ENCODE measurements at regions of chr10 and their contacts with region 1.

Region 1: DNA sequence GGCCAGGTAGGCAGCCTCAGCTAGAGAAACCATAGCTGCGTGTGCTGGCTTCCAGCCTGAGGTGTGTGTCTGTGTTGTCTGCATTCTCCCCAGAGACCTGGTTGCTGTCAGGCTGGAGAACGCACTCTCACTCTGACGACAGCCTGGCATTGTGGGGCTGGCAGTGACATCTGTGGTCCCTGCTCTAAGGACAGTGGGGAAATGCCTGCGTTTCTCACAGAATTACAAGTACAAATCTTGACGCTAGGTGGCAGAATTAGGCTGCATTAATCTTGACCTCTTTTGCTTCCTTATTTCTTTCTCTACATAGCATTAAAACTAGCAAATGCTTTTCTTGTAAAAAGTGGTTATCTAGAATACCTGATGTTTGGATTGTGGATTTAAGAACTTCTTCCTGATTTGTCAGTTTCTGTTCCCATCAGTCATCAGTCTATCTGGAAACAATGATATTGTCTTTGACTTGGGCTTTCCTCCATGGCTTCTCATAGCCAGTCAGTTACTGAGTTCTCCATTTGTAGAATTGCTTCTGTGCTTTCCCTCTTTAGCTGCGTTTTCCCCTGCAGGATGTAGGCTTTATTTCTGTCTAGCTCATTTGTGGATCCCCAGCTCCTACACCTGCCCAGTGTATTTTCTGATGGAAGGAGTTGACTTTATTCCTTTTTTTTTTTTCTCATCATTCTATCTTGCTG is 86.0 kb downstream of the FANK1 start:
- DNase-seq: peak; percentile 31
- ATAC-seq: peak; percentile 85
- H3K4me3 Mint-ChIP-seq: no peak overlapping the region
- H3K27ac Mint-ChIP-seq: peak overlapping the region; percentile 64
- H3K4me1 Mint-ChIP-seq: peaks cover 37% of the 10 kb centered on the region
- H3K27me3 Mint-ChIP-seq: peaks cover 5% of the 10 kb centered on the region
- CTCF ChIP-seq: no peak

Region 2: DNA sequence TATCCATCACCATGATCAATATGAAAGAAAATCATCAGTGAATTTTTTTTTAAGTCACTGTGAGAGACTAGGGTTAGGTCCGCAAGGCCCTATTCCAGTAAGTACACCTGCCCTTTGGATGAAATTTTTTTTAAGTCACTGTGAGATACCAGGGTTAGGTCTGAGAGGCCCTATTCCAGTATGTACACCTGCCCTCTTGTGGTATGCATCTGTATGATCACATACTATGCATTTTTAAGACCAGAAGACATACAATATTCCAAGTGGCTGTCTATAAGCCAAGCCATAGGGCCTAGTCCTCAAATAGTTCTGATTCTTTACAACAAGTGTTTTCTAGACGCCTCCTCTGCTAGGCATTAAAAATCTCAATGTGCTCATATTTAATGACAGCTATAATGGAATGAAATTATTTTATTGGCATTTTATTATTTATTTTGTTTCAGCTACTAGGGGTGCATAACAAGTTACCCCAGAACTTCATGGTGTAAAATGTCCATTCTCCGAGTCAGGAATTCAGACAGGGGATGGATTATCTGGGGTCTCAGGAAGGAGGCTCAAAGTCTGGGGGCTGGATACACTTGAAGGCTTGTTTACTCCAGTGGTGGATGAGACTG is 352.5 kb before region 1 on chr10:
- CTCF ChIA-PET with region 1: no interaction called
- POLR2A ChIA-PET with region 1: no interaction called
- intact Hi-C with region 1: no loop called
- DNase-seq: no peak
- ATAC-seq: no peak
- H3K4me3 Mint-ChIP-seq: no peak overlapping the region
- H3K27ac Mint-ChIP-seq: no peak overlapping the region
- H3K4me1 Mint-ChIP-seq: no peaks in the 10 kb centered on the region
- H3K27me3 Mint-ChIP-seq: peaks cover 6% of the 10 kb centered on the region
- CTCF ChIP-seq: no peak

Region 3: DNA sequence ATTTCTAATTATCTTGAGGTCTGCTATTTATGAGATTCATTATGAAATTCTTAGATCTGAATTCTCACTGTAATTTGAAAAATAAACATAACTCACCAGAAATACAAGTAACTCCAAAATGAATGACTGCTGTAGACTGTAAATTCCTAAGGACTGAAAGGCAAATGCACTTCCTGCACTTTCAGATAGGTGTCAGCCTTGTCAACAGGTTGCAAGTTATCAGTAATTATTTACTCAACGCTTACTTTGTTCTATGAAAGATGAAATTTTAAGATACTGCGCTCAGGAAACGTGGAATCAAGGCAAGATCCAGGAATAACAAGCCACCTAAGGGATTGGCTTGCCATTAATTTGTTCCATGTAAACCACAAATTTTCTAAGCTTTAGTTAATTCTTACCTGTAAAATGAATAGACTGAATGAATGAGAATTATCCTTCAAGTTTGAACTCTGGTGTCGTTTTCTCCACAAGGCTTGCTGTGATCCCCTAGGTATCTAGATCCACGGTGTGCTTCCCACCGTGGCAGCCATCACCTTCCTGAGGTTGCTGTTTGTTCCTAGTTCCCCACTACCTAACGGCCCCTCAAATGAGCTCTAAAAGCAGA is 113.9 kb before region 1 on chr10:
- CTCF ChIA-PET with region 1: no interaction called
- POLR2A ChIA-PET with region 1: no interaction called
- intact Hi-C with region 1: loop called (anchors 2 kb)
- DNase-seq: no peak
- ATAC-seq: no peak
- H3K4me3 Mint-ChIP-seq: no peak overlapping the region
- H3K27ac Mint-ChIP-seq: no peak overlapping the region
- H3K4me1 Mint-ChIP-seq: no peaks in the 10 kb centered on the region
- H3K27me3 Mint-ChIP-seq: no peaks in the 10 kb centered on the region
- CTCF ChIP-seq: peak; percentile 44

Region 4: GRCh38 chr10:126101801-126102200 is 119.4 kb after region 1 on chr10:
- CTCF ChIA-PET with region 1: interaction called, 57 read pairs
- POLR2A ChIA-PET with region 1: no interaction called
- intact Hi-C with region 1: loop called (anchors 1 kb)
- DNase-seq: peak; percentile 21
- ATAC-seq: peak; percentile 93
- H3K4me3 Mint-ChIP-seq: no peak overlapping the region
- H3K27ac Mint-ChIP-seq: peak overlapping the region; percentile 65
- H3K4me1 Mint-ChIP-seq: peaks cover 21% of the 10 kb centered on the region
- H3K27me3 Mint-ChIP-seq: no peaks in the 10 kb centered on the region
- CTCF ChIP-seq: no peak

Region 5: GRCh38 chr10:126302826-126303665 is 320.6 kb after region 1 on chr10:
- CTCF ChIA-PET with region 1: interaction called, 4 read pairs
- POLR2A ChIA-PET with region 1: no interaction called
- intact Hi-C with region 1: loop called (anchors 2 kb)
- DNase-seq: no peak
- ATAC-seq: no peak
- H3K4me3 Mint-ChIP-seq: no peak overlapping the region
- H3K27ac Mint-ChIP-seq: no peak overlapping the region
- H3K4me1 Mint-ChIP-seq: no peaks in the 10 kb centered on the region
- H3K27me3 Mint-ChIP-seq: no peaks in the 10 kb centered on the region
- CTCF ChIP-seq: no peak

Region 6: DNA sequence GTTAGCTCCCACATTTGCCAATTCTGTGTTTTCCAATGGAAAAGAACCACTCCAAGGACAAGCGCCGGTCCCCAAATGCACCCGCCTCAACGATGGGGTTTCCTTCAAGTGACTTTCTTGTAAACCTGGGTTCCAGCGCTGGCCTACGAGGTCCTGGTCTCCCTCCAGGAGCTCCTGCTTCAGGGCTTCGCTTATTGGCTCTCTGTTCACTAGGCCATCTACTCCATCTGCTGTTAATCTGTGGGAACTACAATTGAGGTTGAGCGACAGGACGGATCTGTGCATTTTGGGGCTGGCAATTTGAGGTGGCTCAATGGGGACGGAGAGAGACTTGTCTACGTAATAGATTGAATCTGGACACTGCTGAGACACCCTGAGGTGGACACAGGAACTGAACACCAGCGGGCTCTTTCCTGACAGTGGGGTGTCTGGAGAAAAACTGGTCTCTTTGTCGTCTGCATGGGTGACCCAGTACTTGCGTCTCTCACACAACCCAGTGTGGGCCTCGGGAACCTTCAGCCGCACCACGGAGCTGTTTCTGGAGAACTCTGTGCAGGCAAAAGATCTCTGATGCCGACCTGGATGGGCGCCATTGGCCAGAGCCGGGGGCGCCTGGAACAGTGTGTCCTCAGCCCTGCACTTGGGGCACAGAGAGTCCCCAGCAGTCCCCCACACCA is 521.8 kb after region 1 on chr10:
- CTCF ChIA-PET with region 1: interaction called, 60 read pairs
- POLR2A ChIA-PET with region 1: no interaction called
- intact Hi-C with region 1: loop called (anchors 1 kb)
- DNase-seq: no peak
- ATAC-seq: peak; percentile 57
- H3K4me3 Mint-ChIP-seq: no peak overlapping the region
- H3K27ac Mint-ChIP-seq: no peak overlapping the region
- H3K4me1 Mint-ChIP-seq: no peaks in the 10 kb centered on the region
- H3K27me3 Mint-ChIP-seq: no peaks in the 10 kb centered on the region
- CTCF ChIP-seq: no peak